Panc1 (cell line): ENCODE measurements at regions of chr12 and their contacts with region 1.

Region 1: GRCh38 chr12:40107098-40107802 is 1.4 kb upstream of the SLC2A13 start:
- DNase-seq: no peak
- ATAC-seq: peak; percentile 68
- H3K4me3 ChIP-seq: peak overlapping the region; percentile 59 to 71
- H3K27ac ChIP-seq: no peak overlapping the region
- H3K4me1 ChIP-seq: peaks cover 22% of the 10 kb centered on the region
- H3K27me3 ChIP-seq: no peaks in the 10 kb centered on the region
- CTCF ChIP-seq: peak; percentile 91

Region 2: GRCh38 chr12:39764944-39765560 is 342.2 kb before region 1 on chr12:
- CTCF ChIA-PET with region 1: interaction called, 3 read pairs
- POLR2A ChIA-PET with region 1: no interaction called
- in situ Hi-C with region 1: no loop called
- intact Hi-C with region 1: loop called (anchors 1 kb)
- DNase-seq: peak; percentile 12
- ATAC-seq: no peak
- H3K4me3 ChIP-seq: no peak overlapping the region
- H3K27ac ChIP-seq: no peak overlapping the region
- H3K4me1 ChIP-seq: no peaks in the 10 kb centered on the region
- H3K27me3 ChIP-seq: no peaks in the 10 kb centered on the region
- CTCF ChIP-seq: peak; percentile 72; the same call in 1 of the 2 replicates

Region 3: GRCh38 chr12:40010899-40011774 is 96.1 kb before region 1 on chr12:
- CTCF ChIA-PET with region 1: interaction called, 11 read pairs
- POLR2A ChIA-PET with region 1: no interaction called
- in situ Hi-C with region 1: no loop called
- intact Hi-C with region 1: loop called (anchors 1 kb)
- DNase-seq: peak; percentile 28
- ATAC-seq: peak; percentile 98
- H3K4me3 ChIP-seq: no peak overlapping the region
- H3K27ac ChIP-seq: no peak overlapping the region
- H3K4me1 ChIP-seq: 0 out of 2 replicates have a peak, but pooled peaks cover 2% of the 10 kb centered on the region
- H3K27me3 ChIP-seq: no peaks in the 10 kb centered on the region
- CTCF ChIP-seq: peak; percentile 85